ENCODE measurements at regions of chrX and their contacts with region 1.

Region 1: DNA sequence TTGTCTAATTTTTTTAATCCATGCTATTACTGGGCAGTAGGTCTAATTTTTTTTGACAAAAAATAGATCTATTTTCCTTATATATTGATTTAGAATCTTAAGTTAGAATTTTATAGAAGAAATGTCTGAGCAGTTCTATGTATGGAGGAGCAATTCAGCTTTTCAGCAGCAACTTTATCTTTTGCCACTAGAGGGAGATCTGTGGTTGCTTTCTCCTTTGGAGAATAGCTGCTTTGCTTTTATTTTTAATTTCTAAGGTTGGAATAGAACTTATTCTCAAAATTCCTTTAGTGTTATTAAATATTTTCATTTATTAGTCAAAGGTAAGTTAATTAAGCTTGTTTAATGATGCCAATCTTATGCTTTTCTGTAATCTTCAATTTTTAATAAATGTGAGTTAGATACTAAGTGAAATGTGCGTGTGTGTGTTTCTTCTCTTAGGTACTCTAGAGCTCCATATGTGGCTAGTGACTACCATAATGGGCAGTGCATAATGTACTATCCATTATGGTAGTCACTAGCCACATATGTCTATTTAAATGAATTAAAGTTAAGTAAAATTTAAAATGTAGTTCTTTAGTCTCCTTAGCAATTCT is 29.3 kb downstream of the FAM199X start:
- DNase-seq: no peak
- ATAC-seq: peak in 2 of 4 donors; percentile 50 to 67
- H3K4me3 ChIP-seq: no peak overlapping the region
- H3K27ac ChIP-seq: no peak overlapping the region
- H3K4me1 ChIP-seq: no peaks in the 10 kb centered on the region
- H3K27me3 ChIP-seq: no peaks in the 10 kb centered on the region
- CTCF ChIP-seq: peak; percentile 82

Region 2: DNA sequence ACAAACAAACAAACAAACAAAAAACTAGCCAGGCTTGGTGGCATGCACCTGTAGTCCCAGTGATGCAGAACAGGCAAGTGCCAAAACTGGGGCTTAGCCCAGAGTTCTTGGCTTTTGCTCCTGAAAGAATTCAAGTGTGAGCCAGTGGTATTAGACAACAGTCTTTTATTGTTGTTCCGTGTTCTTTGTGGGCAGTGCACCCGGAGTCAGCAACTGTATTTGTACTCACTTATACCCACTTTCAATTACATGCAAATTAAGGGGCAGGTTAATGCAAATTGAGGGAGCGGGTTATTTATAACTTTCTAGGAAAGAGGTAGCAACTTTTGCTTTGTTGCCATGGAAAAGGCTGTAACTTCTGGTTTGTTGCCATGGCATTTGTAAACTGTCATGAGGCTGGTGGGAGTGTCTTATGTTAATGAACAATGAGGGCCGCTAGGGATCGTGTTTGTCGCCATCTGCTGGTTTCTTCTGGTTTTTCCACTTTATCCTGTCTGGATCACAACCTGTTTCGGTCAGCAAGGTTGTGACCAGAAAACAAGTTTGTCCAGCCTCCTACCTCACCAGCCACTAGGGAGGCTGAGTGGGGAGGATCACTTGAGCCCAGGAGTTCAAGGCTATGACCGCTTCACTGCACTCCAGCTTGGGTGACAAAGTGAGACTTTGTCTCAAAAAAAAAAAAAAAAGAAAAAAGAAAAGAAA is 148.0 kb after region 1 on chrX:
- intact Hi-C with region 1: loop called in 1 of 2 experiments (anchors 10 kb)
- DNase-seq: no peak
- ATAC-seq: peak in 1 of 4 donors; percentile 55
- H3K4me3 ChIP-seq: no peak overlapping the region
- H3K27ac ChIP-seq: no peak overlapping the region
- H3K4me1 ChIP-seq: no peaks in the 10 kb centered on the region
- H3K27me3 ChIP-seq: peaks cover 0 to 10% (median 0%) of the 10 kb centered on the region in 3 donors
- CTCF ChIP-seq: peak; percentile 37

Measured in psoas muscle (tissue), 8 donors.